ENCODE measurements at regions of chr5 and their contacts with region 1.

Region 1: GRCh38 chr5:180470966-180471582 is 23.1 kb upstream of the CNOT6 start:
- DNase-seq: peak; percentile 87
- H3K4me3 ChIP-seq: no peak overlapping the region; a peak in 1 of 4 replicates
- H3K27ac ChIP-seq: no peak overlapping the region
- H3K4me1 ChIP-seq: no peaks in the 10 kb centered on the region; a peak in 1 of 4 replicates
- H3K27me3 ChIP-seq: no peaks in the 10 kb centered on the region
- CTCF ChIP-seq: peak; percentile 90
- EP300 ChIP-seq: no peak
- RAD21 ChIP-seq: peak; percentile 85

Region 2: GRCh38 chr5:180161420-180162303 is 309.4 kb before region 1 on chr5:
- CTCF ChIA-PET with region 1: interaction called, 11 read pairs
- POLR2A ChIA-PET with region 1: no interaction called
- DNase-seq: peak; percentile 80
- H3K4me3 ChIP-seq: peak overlapping the region in 1 of 2 experiments; percentile 19; a peak in 1 of 4 replicates
- H3K27ac ChIP-seq: no peak overlapping the region
- H3K4me1 ChIP-seq: peaks cover 0 to 11% of the 10 kb centered on the region in 2 experiments; a peak in 1 of 4 replicates
- H3K27me3 ChIP-seq: no peaks in the 10 kb centered on the region
- CTCF ChIP-seq: no peak
- EP300 ChIP-seq: no peak
- RAD21 ChIP-seq: peak; percentile 66

Region 3: GRCh38 chr5:180291943-180292831 is 178.9 kb before region 1 on chr5 and contains the start of gene MAPK9:
- CTCF ChIA-PET with region 1: interaction called, 71 read pairs
- POLR2A ChIA-PET with region 1: interaction called, 3 read pairs
- DNase-seq: peak; percentile 97
- H3K4me3 ChIP-seq: peak within 1 kb of the TSS; percentile 85 to 92
- H3K27ac ChIP-seq: peak within 1 kb of the TSS; percentile 47 to 81; a peak in 3 of 4 replicates
- H3K4me1 ChIP-seq: peaks cover 0 to 39% of the 10 kb centered on the region in 2 experiments; a peak in 2 of 4 replicates
- H3K27me3 ChIP-seq: no peaks in the 10 kb centered on the region
- CTCF ChIP-seq: peak; percentile 16; the same call in 1 of the 2 replicates
- EP300 ChIP-seq: no peak
- RAD21 ChIP-seq: no peak
- polyA plus RNA-seq, gene MAPK9: 23.9 and 26.2 TPM in 2 replicates

Region 4: GRCh38 chr5:180343831-180344327 is 127.2 kb before region 1 on chr5:
- CTCF ChIA-PET with region 1: interaction called, 13 read pairs
- POLR2A ChIA-PET with region 1: no interaction called
- DNase-seq: peak; percentile 60
- H3K4me3 ChIP-seq: no peak overlapping the region
- H3K27ac ChIP-seq: peak overlapping the region in 1 of 2 experiments; percentile 11; a peak in 1 of 4 replicates
- H3K4me1 ChIP-seq: peaks cover 0 to 21% of the 10 kb centered on the region in 2 experiments; a peak in 1 of 4 replicates
- H3K27me3 ChIP-seq: no peaks in the 10 kb centered on the region
- CTCF ChIP-seq: no peak
- EP300 ChIP-seq: no peak
- RAD21 ChIP-seq: no peak

Region 5: GRCh38 chr5:180439911-180440769 is 30.9 kb before region 1 on chr5:
- CTCF ChIA-PET with region 1: no interaction called
- POLR2A ChIA-PET with region 1: no interaction called
- DNase-seq: no peak
- H3K4me3 ChIP-seq: no peak overlapping the region
- H3K27ac ChIP-seq: no peak overlapping the region
- H3K4me1 ChIP-seq: no peaks in the 10 kb centered on the region
- H3K27me3 ChIP-seq: no peaks in the 10 kb centered on the region
- CTCF ChIP-seq: no peak
- EP300 ChIP-seq: no peak
- RAD21 ChIP-seq: no peak

Region 6: DNA sequence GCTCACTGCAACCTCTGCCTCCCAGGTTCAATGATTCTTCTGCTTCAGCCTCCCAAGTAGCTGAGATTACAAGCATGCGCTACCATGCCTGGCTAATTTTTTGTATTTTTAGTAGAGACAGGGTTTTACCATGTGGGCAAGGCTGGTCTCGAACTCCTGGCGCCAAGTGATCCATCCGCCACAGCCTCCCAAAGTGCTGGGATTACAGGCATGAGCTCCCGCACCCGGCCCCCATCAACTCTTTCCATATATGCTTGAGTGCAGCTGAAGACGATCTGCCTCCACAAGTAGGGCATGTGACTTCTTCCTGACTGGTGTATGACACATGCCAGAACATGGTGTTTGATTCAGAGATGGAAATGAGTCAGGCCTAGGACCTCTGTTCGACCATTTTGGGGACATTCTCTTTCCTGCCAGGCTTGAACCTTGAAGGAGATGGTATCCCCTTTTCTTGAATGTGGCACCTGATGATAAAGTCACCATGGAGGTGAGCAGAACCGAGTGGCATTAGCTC is 15.6 kb after region 1 on chr5:
- CTCF ChIA-PET with region 1: interaction called, 15 read pairs
- POLR2A ChIA-PET with region 1: no interaction called
- DNase-seq: no peak
- H3K4me3 ChIP-seq: no peak overlapping the region
- H3K27ac ChIP-seq: no peak overlapping the region
- H3K4me1 ChIP-seq: no peaks in the 10 kb centered on the region
- H3K27me3 ChIP-seq: no peaks in the 10 kb centered on the region
- CTCF ChIP-seq: no peak
- EP300 ChIP-seq: no peak
- RAD21 ChIP-seq: no peak

Region 7: GRCh38 chr5:180668835-180669596 is 197.9 kb after region 1 on chr5:
- CTCF ChIA-PET with region 1: no interaction called
- POLR2A ChIA-PET with region 1: no interaction called
- DNase-seq: no peak
- H3K4me3 ChIP-seq: no peak overlapping the region
- H3K27ac ChIP-seq: no peak overlapping the region
- H3K4me1 ChIP-seq: no peaks in the 10 kb centered on the region; a peak in 1 of 4 replicates
- H3K27me3 ChIP-seq: peaks cover 13% of the 10 kb centered on the region
- CTCF ChIP-seq: no peak
- EP300 ChIP-seq: no peak
- RAD21 ChIP-seq: no peak